ENCODE measurements at regions of chr17 and their contacts with region 1.

Region 1: DNA sequence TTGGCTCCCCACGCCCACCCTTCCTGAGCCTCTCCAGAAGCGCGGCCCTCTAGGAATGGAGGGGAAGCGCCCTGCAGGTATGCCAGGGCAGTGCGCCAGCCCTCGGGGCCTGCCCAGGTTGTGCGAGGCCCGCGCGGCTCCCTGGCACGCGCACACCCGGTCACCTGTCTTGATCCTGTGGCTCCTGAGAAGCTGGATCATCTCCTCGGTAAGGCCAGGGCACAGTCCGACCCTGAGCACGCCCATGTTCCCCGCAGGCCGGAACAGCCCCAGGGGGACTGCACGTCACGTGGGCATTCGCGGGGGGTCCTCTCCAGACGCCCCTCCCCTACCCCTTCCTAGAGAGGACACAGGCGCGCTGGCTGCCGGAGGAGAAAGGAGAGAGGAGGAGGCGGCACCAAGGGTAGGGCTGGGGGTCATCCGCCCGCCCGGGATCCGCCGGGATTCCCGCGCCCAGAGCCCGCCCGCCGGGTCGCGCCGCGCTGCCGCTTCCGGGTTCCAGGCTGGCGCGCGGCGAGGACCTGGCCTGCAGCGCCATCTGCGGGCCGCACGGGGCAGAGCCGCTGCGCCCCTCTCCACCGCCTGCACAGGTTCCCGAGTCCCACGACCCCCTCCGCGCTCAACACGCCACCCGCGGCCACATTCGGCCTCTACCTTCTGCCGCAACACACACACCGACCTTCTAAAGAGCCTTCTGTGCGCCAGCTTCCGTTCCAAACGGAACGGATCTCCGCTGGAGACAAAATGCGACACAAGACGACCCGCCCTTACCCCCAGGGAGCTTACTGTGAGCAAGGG is at the start of gene RAD51D:
- DNase-seq: peak; percentile 63 to 90 (median 76)
- ATAC-seq: peak; percentile 88
- H3K4me3 ChIP-seq: peak within 1 kb of the TSS; percentile 86 to 97
- H3K4me3 Mint-ChIP-seq: peak within 1 kb of the TSS; percentile 92
- H3K27ac ChIP-seq: peak within 1 kb of the TSS; percentile 74 to 79
- H3K27ac Mint-ChIP-seq: peak within 1 kb of the TSS; percentile 95
- H3K4me1 ChIP-seq: peaks cover 25% of the 10 kb centered on the region
- H3K4me1 Mint-ChIP-seq: peaks cover 43% of the 10 kb centered on the region
- H3K27me3 ChIP-seq: no peaks in the 10 kb centered on the region
- H3K27me3 Mint-ChIP-seq: no peaks in the 10 kb centered on the region
- CTCF ChIP-seq: peak; percentile 79
- total RNA-seq, gene RAD51D: 6.9 to 8.7 TPM

Region 2: DNA sequence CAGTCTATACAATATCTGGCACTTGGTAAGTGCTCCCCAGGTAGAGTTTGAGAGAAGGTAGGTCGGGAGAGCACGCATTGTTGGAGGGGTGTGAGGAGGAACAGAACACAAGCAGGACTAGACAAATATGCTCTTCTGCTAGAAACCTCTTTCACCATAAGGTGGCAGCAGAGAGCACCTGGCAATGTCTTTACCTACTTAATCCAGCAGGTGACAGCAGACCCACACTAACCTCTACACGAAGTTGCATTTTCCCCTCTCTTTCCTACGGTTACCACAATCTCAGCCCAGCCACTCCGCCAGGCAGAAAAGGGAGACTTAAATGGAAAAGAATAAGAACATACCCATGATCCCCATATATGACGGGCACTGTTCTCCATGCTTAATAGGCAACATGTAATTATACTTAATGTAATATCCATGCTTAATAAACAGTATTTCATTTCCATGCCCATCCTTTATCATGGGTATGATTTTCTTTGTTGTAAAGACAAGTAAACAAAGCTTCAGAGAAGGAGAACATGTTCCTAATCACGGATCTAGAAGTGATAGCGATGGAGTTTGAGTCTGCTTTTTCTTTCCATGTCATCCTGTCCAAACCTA is 919.5 kb before region 1 on chr17:
- CTCF ChIA-PET with region 1: interaction called, 4 read pairs
- POLR2A ChIA-PET with region 1: no interaction called
- intact Hi-C with region 1: loop called (anchors 1 to 2 kb)
- DNase-seq: peak; percentile 47 to 82 (median 65)
- ATAC-seq: peak; percentile 92
- H3K4me3 ChIP-seq: no peak overlapping the region
- H3K4me3 Mint-ChIP-seq: no peak overlapping the region
- H3K27ac ChIP-seq: no peak overlapping the region
- H3K27ac Mint-ChIP-seq: no peak overlapping the region
- H3K4me1 ChIP-seq: no peaks in the 10 kb centered on the region
- H3K4me1 Mint-ChIP-seq: peaks cover 4% of the 10 kb centered on the region
- H3K27me3 ChIP-seq: peaks cover 0 to 2% of the 10 kb centered on the region in 2 experiments
- H3K27me3 Mint-ChIP-seq: peaks cover 25% of the 10 kb centered on the region
- CTCF ChIP-seq: peak; percentile 100

Region 3: GRCh38 chr17:34542700-34543336 is 576.7 kb before region 1 on chr17:
- CTCF ChIA-PET with region 1: interaction called, 32 read pairs
- POLR2A ChIA-PET with region 1: no interaction called
- intact Hi-C with region 1: loop called in 1 of 2 experiments (anchors 1 kb)
- DNase-seq: peak in 8 of 9 experiments; percentile 16 to 71 (median 59)
- ATAC-seq: no peak
- H3K4me3 ChIP-seq: no peak overlapping the region
- H3K4me3 Mint-ChIP-seq: no peak overlapping the region
- H3K27ac ChIP-seq: no peak overlapping the region
- H3K27ac Mint-ChIP-seq: no peak overlapping the region
- H3K4me1 ChIP-seq: no peaks in the 10 kb centered on the region
- H3K4me1 Mint-ChIP-seq: no peaks in the 10 kb centered on the region
- H3K27me3 ChIP-seq: no peaks in the 10 kb centered on the region
- H3K27me3 Mint-ChIP-seq: peaks cover 32% of the 10 kb centered on the region
- CTCF ChIP-seq: peak; percentile 71

Region 4: GRCh38 chr17:34637548-34638525 is 481.7 kb before region 1 on chr17:
- CTCF ChIA-PET with region 1: interaction called, 10 read pairs
- POLR2A ChIA-PET with region 1: no interaction called
- intact Hi-C with region 1: loop called in 1 of 2 experiments (anchors 5 kb)
- DNase-seq: peak; percentile 62 to 90 (median 82)
- ATAC-seq: peak; percentile 97
- H3K4me3 ChIP-seq: peak overlapping the region; percentile 67 to 84
- H3K4me3 Mint-ChIP-seq: peak overlapping the region; percentile 91
- H3K27ac ChIP-seq: peak overlapping the region in 1 of 2 experiments; percentile 24
- H3K27ac Mint-ChIP-seq: no peak overlapping the region
- H3K4me1 ChIP-seq: peaks cover 18% of the 10 kb centered on the region
- H3K4me1 Mint-ChIP-seq: peaks cover 17% of the 10 kb centered on the region
- H3K27me3 ChIP-seq: no peaks in the 10 kb centered on the region
- H3K27me3 Mint-ChIP-seq: peaks cover 6% of the 10 kb centered on the region
- CTCF ChIP-seq: peak; percentile 77

Region 5: GRCh38 chr17:34980681-34981537 is 138.7 kb before region 1 on chr17:
- CTCF ChIA-PET with region 1: interaction called, 23 read pairs
- POLR2A ChIA-PET with region 1: interaction called, 3 read pairs
- intact Hi-C with region 1: loop called in 1 of 2 experiments (anchors 1 kb)
- DNase-seq: peak in 8 of 9 experiments; percentile 13 to 90 (median 75)
- ATAC-seq: peak; percentile 84
- H3K4me3 ChIP-seq: peak overlapping the region; percentile 80 to 86
- H3K4me3 Mint-ChIP-seq: peak overlapping the region; percentile 92
- H3K27ac ChIP-seq: peak overlapping the region; percentile 93 to 98
- H3K27ac Mint-ChIP-seq: peak overlapping the region; percentile 98
- H3K4me1 ChIP-seq: peaks cover 26% of the 10 kb centered on the region
- H3K4me1 Mint-ChIP-seq: peaks cover 55% of the 10 kb centered on the region
- H3K27me3 ChIP-seq: no peaks in the 10 kb centered on the region
- H3K27me3 Mint-ChIP-seq: no peaks in the 10 kb centered on the region
- CTCF ChIP-seq: no peak

Region 6: GRCh38 chr17:35063514-35064223 is 55.9 kb before region 1 on chr17 and contains the start of gene RFFL:
- CTCF ChIA-PET with region 1: interaction called, 16 read pairs
- POLR2A ChIA-PET with region 1: interaction called, 8 read pairs
- intact Hi-C with region 1: loop called (anchors 1 to 2 kb)
- DNase-seq: peak; percentile 62 to 97 (median 85)
- ATAC-seq: peak; percentile 98
- H3K4me3 ChIP-seq: peak within 1 kb of the TSS in 1 of 2 experiments; percentile 38
- H3K4me3 Mint-ChIP-seq: peak within 1 kb of the TSS; percentile 85
- H3K27ac ChIP-seq: peak within 1 kb of the TSS; percentile 63 to 73
- H3K27ac Mint-ChIP-seq: peak within 1 kb of the TSS; percentile 97
- H3K4me1 ChIP-seq: peaks cover 35% of the 10 kb centered on the region
- H3K4me1 Mint-ChIP-seq: peaks cover 66% of the 10 kb centered on the region
- H3K27me3 ChIP-seq: no peaks in the 10 kb centered on the region
- H3K27me3 Mint-ChIP-seq: no peaks in the 10 kb centered on the region
- CTCF ChIP-seq: no peak
- total RNA-seq, gene RFFL: 55.2 to 64.4 TPM

Region 7: DNA sequence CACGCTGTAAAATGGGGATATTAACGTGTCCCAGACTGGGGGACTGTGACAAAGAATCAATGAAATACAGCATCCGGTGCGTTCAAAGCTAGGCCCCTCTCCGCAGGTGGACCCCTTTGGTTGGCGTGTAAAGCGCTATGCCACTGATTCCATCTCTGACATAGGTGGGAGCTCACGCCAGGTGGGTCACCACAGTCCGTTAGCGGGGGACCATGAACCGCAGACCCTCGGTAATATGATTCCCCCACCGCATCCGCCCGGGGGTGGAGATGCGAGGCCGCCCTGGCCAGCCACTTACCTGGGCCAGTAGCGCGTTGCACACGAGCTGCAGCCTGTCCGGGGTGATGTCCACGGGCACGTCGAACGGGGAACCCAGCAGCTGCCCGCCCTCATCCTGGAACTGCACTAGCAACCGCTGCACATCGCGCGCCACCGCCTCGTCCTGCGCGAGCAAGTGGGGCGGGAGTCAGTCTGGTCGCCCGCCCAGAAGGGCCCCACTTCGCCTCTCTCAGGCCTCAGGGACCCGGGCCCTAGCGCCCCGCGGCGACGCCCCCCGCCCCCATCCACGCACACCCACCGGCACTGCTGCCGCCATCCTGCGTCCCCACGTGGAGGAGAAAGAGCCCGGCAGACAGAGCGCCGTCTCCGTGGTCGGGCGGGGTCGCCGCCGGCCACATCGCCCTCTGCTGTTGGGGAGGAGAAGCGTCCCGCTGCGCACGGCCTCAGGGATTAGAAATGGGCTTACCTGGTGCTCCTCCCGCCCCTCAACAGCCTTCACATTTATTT is 22.3 kb after region 1 on chr17 and contains the start of gene NLE1:
- CTCF ChIA-PET with region 1: interaction called, 17 read pairs
- POLR2A ChIA-PET with region 1: interaction called, 3 read pairs
- intact Hi-C with region 1: loop called in 1 of 2 experiments (anchors 1 kb)
- DNase-seq: peak; percentile 82 to 93 (median 88)
- ATAC-seq: peak; percentile 97
- H3K4me3 ChIP-seq: peak within 1 kb of the TSS; percentile 98 to 99
- H3K4me3 Mint-ChIP-seq: peak within 1 kb of the TSS; percentile 85
- H3K27ac ChIP-seq: peak within 1 kb of the TSS; percentile 54 to 72
- H3K27ac Mint-ChIP-seq: peak within 1 kb of the TSS; percentile 76
- H3K4me1 ChIP-seq: peaks cover 8% of the 10 kb centered on the region
- H3K4me1 Mint-ChIP-seq: peaks cover 17% of the 10 kb centered on the region
- H3K27me3 ChIP-seq: no peaks in the 10 kb centered on the region
- H3K27me3 Mint-ChIP-seq: no peaks in the 10 kb centered on the region
- CTCF ChIP-seq: peak; percentile 97
- total RNA-seq, gene NLE1: 9.4 to 11.3 TPM

Region 8: GRCh38 chr17:35160354-35161201 is 41.0 kb after region 1 on chr17:
- CTCF ChIA-PET with region 1: no interaction called
- POLR2A ChIA-PET with region 1: no interaction called
- intact Hi-C with region 1: no loop called
- DNase-seq: peak in 7 of 9 experiments; percentile 23 to 86 (median 57)
- ATAC-seq: peak; percentile 73
- H3K4me3 ChIP-seq: peak overlapping the region; percentile 5 to 25
- H3K4me3 Mint-ChIP-seq: peak overlapping the region; percentile 70
- H3K27ac ChIP-seq: peak overlapping the region; percentile 40 to 77
- H3K27ac Mint-ChIP-seq: peak overlapping the region; percentile 95
- H3K4me1 ChIP-seq: peaks cover 53% of the 10 kb centered on the region
- H3K4me1 Mint-ChIP-seq: peaks cover 56% of the 10 kb centered on the region
- H3K27me3 ChIP-seq: no peaks in the 10 kb centered on the region
- H3K27me3 Mint-ChIP-seq: no peaks in the 10 kb centered on the region
- CTCF ChIP-seq: no peak